Heart left ventricle (tissue), 16 donors: ENCODE measurements at regions of chr15 and their contacts with region 1.

Region 1: DNA sequence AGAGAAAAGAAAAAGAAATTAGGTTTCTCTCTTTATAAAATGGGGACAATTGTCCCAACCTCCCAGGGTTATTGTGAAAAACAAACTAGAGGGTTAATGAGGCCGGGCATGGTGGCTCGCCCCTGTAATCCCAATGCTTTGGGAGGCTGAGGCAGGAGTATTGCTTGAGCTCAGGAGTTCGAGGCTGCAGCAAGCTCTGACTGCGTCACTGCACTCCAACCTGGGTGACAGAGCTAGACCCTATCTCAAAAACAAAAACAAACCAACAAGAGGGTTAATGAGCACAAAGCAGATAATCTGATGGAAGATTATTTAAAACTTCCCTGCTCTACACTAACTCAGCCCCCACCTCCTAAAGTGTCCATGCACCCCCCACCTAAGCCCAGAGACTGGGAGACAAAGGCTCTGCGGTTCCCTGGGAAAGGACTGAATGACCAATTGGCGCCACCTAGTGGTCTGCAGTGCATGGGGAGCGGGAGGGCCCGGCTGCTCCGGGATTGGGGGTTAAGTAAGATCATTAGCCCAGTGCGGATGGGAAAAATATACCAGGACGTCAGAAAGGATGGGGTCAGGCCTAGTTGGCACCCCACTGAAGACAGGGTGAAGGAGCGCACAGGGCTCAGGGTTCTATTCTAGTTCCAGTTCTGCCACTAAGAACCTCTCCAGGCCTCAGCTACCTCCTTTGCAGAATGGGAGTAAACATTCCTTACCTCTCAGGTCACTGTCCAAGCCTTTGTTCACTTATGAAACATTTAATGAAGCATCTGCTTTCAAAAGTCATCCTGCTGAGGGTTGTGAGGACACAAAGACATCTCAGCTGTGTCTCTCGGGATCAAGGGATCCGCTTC is 15.6 kb downstream of the PIF1 start:
- DNase-seq: peak; percentile 77 to 88 (median 83)
- ATAC-seq: peak; percentile 78 to 82 (median 81)
- H3K4me3 ChIP-seq: no peak overlapping the region
- H3K27ac ChIP-seq: peak overlapping the region in 1 of 12 donors; percentile 90
- H3K4me1 ChIP-seq: peaks cover 0 to 16% (median 0%) of the 10 kb centered on the region in 12 donors
- H3K27me3 ChIP-seq: no peaks in the 10 kb centered on the region
- CTCF ChIP-seq: peak; percentile 78 to 93 (median 89)
- POLR2A ChIP-seq: no peak

Region 2: GRCh38 chr15:64681424-64682024 is 128.3 kb before region 1 on chr15:
- intact Hi-C with region 1: loop called in 8 of 10 experiments (anchors 2 to 10 kb)
- DNase-seq: peak in 1 of 5 donors; percentile 45
- ATAC-seq: peak; percentile 75 to 83 (median 79)
- H3K4me3 ChIP-seq: no peak overlapping the region
- H3K27ac ChIP-seq: no peak overlapping the region
- H3K4me1 ChIP-seq: peaks cover 0 to 28% (median 9%) of the 10 kb centered on the region in 12 donors
- H3K27me3 ChIP-seq: no peaks in the 10 kb centered on the region
- CTCF ChIP-seq: peak; percentile 42 to 80 (median 65)
- POLR2A ChIP-seq: no peak

Region 3: GRCh38 chr15:64731012-64731806 is 78.7 kb before region 1 on chr15:
- intact Hi-C with region 1: loop called (anchors 1 to 5 kb)
- DNase-seq: peak; percentile 81 to 89 (median 83)
- ATAC-seq: peak; percentile 47 to 79 (median 70)
- H3K4me3 ChIP-seq: no peak overlapping the region
- H3K27ac ChIP-seq: peak overlapping the region in 1 of 12 donors; percentile 19
- H3K4me1 ChIP-seq: peaks cover 0 to 14% (median 0%) of the 10 kb centered on the region in 12 donors
- H3K27me3 ChIP-seq: no peaks in the 10 kb centered on the region
- CTCF ChIP-seq: peak; percentile 82 to 96 (median 90)
- POLR2A ChIP-seq: no peak

Region 4: DNA sequence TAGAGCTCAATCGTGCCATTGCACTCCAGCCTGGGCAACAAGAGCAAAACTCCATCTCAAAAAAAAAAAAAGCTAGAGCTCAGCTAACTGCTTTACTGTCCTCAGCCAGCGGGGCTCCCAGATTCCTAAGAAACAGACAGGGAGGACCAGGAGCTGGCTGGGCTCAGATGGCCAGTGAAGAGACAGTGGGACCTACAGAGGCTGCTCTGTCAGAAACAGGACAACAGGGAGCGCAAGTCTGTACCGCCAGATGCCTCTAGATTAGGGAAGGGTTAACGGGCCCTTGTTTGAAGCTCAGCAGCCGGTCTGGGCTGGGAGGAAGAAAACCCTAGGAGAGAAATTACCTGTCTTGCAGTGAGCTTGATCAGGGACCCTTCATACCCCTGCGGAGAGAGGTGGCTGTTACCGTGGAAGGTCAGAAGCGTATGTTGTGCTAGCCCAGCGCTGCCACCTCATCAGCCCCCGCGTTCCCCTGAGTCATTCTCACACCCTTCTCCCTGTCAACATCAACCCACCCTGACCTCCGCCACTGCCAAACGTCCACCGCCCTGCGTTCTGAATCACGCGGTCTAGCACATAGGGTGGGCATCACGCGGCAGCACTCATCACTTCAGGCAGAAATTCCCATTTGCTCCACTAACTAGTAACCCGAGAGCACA is 59.7 kb before region 1 on chr15:
- intact Hi-C with region 1: loop called in 1 of 10 experiments (anchors 5 kb)
- DNase-seq: peak in 4 of 5 donors; percentile 54 to 76 (median 69)
- ATAC-seq: peak; percentile 36 to 66 (median 48)
- H3K4me3 ChIP-seq: peak overlapping the region in 6 of 12 donors; percentile 7 to 41 (median 32)
- H3K27ac ChIP-seq: peak overlapping the region; percentile 16 to 76 (median 69)
- H3K4me1 ChIP-seq: peaks cover 0 to 88% (median 36%) of the 10 kb centered on the region in 12 donors
- H3K27me3 ChIP-seq: no peaks in the 10 kb centered on the region
- CTCF ChIP-seq: peak in 3 of 12 donors; percentile 8 to 35 (median 35)
- POLR2A ChIP-seq: no peak

Region 5: DNA sequence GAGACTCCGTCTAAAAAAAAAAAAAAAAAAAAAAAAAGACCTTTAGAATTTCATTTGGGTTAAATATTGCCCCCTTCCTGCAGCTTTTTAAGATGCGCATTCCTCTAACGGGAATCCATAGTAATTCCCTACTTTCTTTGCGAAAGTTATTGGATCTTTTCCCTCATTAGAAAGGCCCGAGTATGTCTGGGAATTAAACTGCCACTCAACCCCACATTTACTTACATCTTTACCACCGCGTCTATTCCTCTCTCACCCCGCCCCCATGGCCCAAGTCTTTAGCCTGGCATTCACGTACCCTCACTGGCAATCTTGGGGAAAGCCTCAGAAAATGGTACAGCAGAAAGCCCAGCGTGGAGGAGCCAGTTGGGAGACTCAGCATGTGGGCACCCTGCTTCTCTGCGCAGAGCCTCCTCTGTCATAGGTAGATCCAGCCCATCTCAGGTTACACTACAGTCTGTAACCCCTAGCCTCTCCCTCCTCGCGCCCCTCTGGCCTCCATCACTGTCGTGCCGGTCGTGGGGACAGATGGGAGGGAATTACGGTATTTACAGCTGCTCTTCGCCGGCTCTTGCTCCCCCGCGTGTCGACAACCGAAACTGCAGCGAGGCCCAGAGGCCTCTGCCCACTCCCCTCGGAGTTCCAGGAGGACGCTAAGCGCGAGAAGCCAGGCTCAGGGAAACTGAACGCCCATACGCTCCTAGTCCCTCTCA is 95.4 kb after region 1 on chr15:
- intact Hi-C with region 1: loop called in 2 of 10 experiments (anchors 5 to 10 kb)
- DNase-seq: peak; percentile 81 to 92 (median 83)
- ATAC-seq: peak; percentile 68 to 95 (median 94)
- H3K4me3 ChIP-seq: peak overlapping the region in 10 of 12 donors; percentile 10 to 59 (median 44)
- H3K27ac ChIP-seq: peak overlapping the region in 4 of 12 donors; percentile 5 to 59 (median 42)
- H3K4me1 ChIP-seq: peaks cover 0 to 38% (median 2%) of the 10 kb centered on the region in 12 donors
- H3K27me3 ChIP-seq: peaks cover 0 to 2% (median 0%) of the 10 kb centered on the region in 9 donors
- CTCF ChIP-seq: peak; percentile 82 to 96 (median 91)
- POLR2A ChIP-seq: no peak